CD8-positive, alpha-beta memory T cell (primary cell): ENCODE measurements at regions of chr6 and their contacts with region 1.

Region 1: GRCh38 chr6:18503593-18504231 is 116.6 kb downstream of the RNF144B start:
- DNase-seq: peak in 3 of 5 donors; percentile 14 to 48 (median 29)
- H3K4me3 ChIP-seq: no peak overlapping the region
- H3K4me3 Mint-ChIP-seq: peak overlapping the region in 2 of 7 donors; percentile 13 to 14
- H3K27ac ChIP-seq: no peak overlapping the region
- H3K27ac Mint-ChIP-seq: no peak overlapping the region
- H3K4me1 ChIP-seq: no peaks in the 10 kb centered on the region
- H3K4me1 Mint-ChIP-seq: no peaks in the 10 kb centered on the region
- H3K27me3 ChIP-seq: no peaks in the 10 kb centered on the region
- H3K27me3 Mint-ChIP-seq: peaks cover 4 to 7% of the 10 kb centered on the region in 2 donors

Region 2: DNA sequence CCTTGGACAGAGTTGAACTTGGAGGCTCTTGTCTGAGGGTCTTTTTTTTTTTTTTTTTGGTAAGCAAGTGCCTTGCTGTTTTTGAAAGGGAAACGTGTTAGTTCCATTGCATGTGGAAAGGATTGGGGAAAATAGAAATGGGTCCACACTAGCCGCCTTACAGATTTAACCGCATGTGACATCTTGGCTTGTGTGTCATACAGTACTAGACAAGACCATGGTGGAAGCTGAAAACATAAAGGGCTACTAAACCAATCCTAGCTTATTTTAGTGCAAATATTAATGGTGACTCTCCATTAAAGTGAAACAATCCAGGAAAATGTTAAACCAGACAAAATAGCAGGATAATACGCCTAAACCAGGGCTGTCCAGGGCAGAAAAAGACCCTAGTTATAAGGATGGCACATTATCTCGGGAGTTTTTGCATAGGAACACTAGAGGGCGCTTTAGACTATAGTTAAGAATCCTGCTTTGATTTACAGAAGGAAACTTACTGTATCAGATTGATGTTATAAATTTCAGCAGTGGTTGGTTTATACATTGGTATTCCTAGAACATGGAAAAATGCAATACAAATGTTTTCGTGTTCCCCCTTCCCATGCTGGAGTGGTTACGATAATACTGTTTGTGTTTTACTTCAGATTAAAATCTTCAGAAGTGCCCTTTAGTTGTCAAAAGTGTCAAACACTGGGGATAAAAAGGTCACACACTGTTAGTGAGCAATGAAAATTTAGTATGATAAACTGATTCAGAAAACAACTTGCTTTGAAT is 179.6 kb before region 1 on chr6:
- CTCF ChIA-PET with region 1: interaction called, 50 read pairs
- POLR2A ChIA-PET with region 1: no interaction called
- DNase-seq: peak in 2 of 5 donors; percentile 21 to 41
- H3K4me3 ChIP-seq: no peak overlapping the region
- H3K4me3 Mint-ChIP-seq: no peak overlapping the region
- H3K27ac ChIP-seq: no peak overlapping the region
- H3K27ac Mint-ChIP-seq: no peak overlapping the region
- H3K4me1 ChIP-seq: no peaks in the 10 kb centered on the region
- H3K4me1 Mint-ChIP-seq: peaks cover 0 to 2% (median 0%) of the 10 kb centered on the region in 3 donors
- H3K27me3 ChIP-seq: no peaks in the 10 kb centered on the region
- H3K27me3 Mint-ChIP-seq: peaks cover 7 to 16% of the 10 kb centered on the region in 2 donors

Region 3: GRCh38 chr6:18330548-18331081 is 173.1 kb before region 1 on chr6:
- CTCF ChIA-PET with region 1: interaction called, 12 read pairs
- POLR2A ChIA-PET with region 1: no interaction called
- DNase-seq: no peak
- H3K4me3 ChIP-seq: no peak overlapping the region
- H3K4me3 Mint-ChIP-seq: no peak overlapping the region
- H3K27ac ChIP-seq: no peak overlapping the region
- H3K27ac Mint-ChIP-seq: no peak overlapping the region
- H3K4me1 ChIP-seq: no peaks in the 10 kb centered on the region
- H3K4me1 Mint-ChIP-seq: peaks cover 0 to 2% (median 0%) of the 10 kb centered on the region in 3 donors
- H3K27me3 ChIP-seq: no peaks in the 10 kb centered on the region
- H3K27me3 Mint-ChIP-seq: peaks cover 8 to 21% of the 10 kb centered on the region in 2 donors